ENCODE measurements at regions of chr3 and their contacts with region 1.

Region 1: DNA sequence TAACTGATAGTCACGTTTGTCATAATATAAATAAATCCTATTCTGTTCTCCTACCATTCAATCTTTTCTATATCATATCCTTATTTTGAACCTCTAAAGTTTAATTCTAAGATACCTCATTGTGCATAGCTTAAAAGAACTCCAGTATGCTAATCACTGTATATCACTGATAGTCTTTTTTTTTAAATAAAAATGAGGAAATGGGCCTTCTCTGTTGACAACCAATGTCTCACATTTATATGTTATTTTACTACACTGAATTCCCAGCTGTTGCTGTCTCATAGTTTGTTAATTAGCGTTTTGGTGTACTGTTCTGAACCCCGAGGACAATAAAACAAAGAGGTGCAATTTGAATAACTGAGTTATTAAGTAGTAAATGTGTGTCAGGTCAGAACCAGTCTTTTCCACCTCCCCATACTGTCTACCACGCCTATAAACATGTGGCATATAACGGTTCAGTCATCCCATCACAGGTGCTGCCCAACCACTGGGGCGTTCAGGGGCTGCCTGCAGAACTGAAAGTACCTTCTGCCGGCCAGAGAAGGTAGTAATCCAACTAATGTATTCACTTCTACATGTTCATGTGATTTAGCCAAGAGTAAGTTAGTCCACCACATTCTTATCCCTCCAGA is 14.9 kb downstream of the CBLB start:
- DNase-seq: no peak
- ATAC-seq: no peak
- H3K4me3 Mint-ChIP-seq: no peak overlapping the region
- H3K27ac Mint-ChIP-seq: no peak overlapping the region
- H3K4me1 Mint-ChIP-seq: peaks cover 5% of the 10 kb centered on the region
- H3K27me3 Mint-ChIP-seq: no peaks in the 10 kb centered on the region
- CTCF ChIP-seq: no peak

Region 2: GRCh38 chr3:105876780-105877327 is 22.9 kb after region 1 on chr3:
- CTCF ChIA-PET with region 1: no interaction called
- POLR2A ChIA-PET with region 1: interaction called, 10 read pairs
- DNase-seq: no peak
- ATAC-seq: no peak
- H3K4me3 Mint-ChIP-seq: no peak overlapping the region
- H3K27ac Mint-ChIP-seq: no peak overlapping the region
- H3K4me1 Mint-ChIP-seq: peaks cover 9% of the 10 kb centered on the region
- H3K27me3 Mint-ChIP-seq: no peaks in the 10 kb centered on the region
- CTCF ChIP-seq: no peak

Measured in WTC11 (cell line).